Calu3 (cell line): ENCODE measurements at regions of chr17 and their contacts with region 1.

Region 1: DNA sequence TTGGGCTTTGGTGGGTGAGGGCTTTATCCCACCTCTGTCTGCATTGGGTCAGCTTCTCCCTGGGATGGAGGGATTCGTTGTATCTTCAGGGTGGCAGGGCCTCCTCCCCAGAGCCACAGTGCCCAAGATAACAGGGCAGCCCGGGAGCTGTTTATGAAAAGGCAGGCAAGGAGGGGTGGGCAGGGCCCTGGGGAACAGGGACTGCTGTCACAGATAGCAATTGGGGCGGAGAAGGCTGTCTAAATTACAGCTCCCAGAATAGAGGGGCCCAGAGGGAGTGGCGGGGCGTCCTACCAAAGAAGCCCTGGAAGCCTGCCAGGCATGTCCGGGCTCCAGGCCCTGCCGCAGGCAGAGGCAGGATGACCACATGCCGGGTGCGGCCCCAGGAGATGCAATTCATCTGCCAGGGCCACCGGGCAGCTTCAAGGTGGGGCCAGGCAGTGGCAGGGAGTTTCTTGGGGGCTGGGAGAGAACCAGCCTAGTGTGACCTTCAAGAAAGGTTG is 18.8 kb upstream of the PHOSPHO1 start:
- DNase-seq: peak; percentile 70
- H3K4me3 Mint-ChIP-seq: no peak overlapping the region
- H3K27ac Mint-ChIP-seq: no peak overlapping the region
- H3K4me1 Mint-ChIP-seq: peaks cover 9% of the 10 kb centered on the region
- H3K27me3 Mint-ChIP-seq: peaks cover 34% of the 10 kb centered on the region
- CTCF ChIP-seq: no peak

Region 2: GRCh38 chr17:49234509-49235080 is 14.7 kb before region 1 on chr17:
- CTCF ChIA-PET with region 1: no interaction called
- intact Hi-C with region 1: loop called (anchors 1 kb)
- DNase-seq: no peak
- H3K4me3 Mint-ChIP-seq: no peak overlapping the region
- H3K27ac Mint-ChIP-seq: no peak overlapping the region
- H3K4me1 Mint-ChIP-seq: no peaks in the 10 kb centered on the region
- H3K27me3 Mint-ChIP-seq: peaks cover 47% of the 10 kb centered on the region
- CTCF ChIP-seq: no peak